WTC11 (cell line): ENCODE measurements at regions of chr19 and their contacts with region 1.

Region 1: GRCh38 chr19:45385392-45386221 is 15.2 kb upstream of the ERCC2 start:
- DNase-seq: peak; percentile 67
- ATAC-seq: peak; percentile 84
- H3K4me3 Mint-ChIP-seq: peak overlapping the region; percentile 58
- H3K27ac Mint-ChIP-seq: no peak overlapping the region
- H3K4me1 Mint-ChIP-seq: no peaks in the 10 kb centered on the region
- H3K27me3 Mint-ChIP-seq: peaks cover 46% of the 10 kb centered on the region
- CTCF ChIP-seq: no peak

Region 2: GRCh38 chr19:45400192-45400591 is 14.6 kb after region 1 on chr19:
- CTCF ChIA-PET with region 1: interaction called, 35 read pairs
- POLR2A ChIA-PET with region 1: no interaction called
- DNase-seq: no peak
- ATAC-seq: no peak
- H3K4me3 Mint-ChIP-seq: no peak overlapping the region
- H3K27ac Mint-ChIP-seq: no peak overlapping the region
- H3K4me1 Mint-ChIP-seq: peaks cover 32% of the 10 kb centered on the region
- H3K27me3 Mint-ChIP-seq: peaks cover 42% of the 10 kb centered on the region
- CTCF ChIP-seq: no peak